RWPE1 (cell line): ENCODE measurements at regions of chr1 and their contacts with region 1.

Region 1: DNA sequence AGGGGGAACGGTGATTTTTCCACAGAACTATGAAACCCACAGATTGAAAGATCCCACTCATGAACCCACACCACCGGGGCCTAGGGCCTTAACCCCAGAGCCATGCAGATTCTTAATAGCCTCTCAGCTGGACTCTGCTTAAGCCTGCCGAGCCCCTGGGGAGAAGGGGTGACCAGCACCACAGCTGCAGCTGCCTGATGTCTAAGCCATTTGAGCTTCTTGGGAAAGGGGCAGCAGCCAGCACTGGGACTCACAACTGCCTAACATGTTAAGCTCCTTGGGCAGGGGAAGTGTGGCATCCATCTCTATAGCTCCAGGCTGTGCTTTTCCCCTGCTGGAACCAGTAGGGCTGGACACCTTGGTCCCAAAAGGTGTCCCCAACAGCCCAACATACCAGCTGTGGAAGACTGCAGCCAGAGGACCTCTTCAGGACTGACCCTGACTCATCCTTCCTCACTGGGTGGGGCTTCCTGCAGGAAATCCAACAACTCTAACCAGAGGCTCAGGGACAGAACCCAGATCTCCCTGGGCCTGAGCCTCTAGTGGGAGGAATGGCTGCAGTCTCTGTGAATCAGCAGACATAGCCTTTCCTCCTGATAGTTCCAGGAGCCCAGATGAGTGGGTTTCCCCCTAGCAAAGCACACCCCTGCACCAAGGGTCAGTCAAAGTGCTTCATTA is 34.6 kb upstream of the FMO3 start:
- DNase-seq: no peak
- H3K27ac ChIP-seq: no peak overlapping the region
- CTCF ChIP-seq: no peak

Region 2: DNA sequence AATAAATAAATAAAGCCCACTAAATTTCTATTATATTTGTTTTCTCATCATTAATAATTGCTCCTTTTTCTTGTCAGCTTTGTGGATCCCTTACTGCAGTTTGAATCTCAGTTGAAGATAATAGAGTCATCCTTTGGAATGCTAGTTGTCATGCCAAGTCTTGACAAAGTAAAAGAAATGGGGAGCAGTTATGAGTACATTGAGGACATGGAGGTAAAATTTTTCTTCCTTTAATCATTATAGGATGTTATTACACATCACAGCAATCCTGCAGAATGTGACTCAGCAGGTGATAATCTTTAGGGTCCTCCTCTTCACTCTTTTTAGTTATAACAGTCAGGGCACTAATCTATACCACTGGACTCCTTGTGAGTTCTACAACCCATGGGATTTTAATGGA is 96.7 kb before region 1 on chr1:
- CTCF ChIA-PET with region 1: no interaction called
- POLR2A ChIA-PET with region 1: no interaction called
- DNase-seq: peak; percentile 5
- H3K27ac ChIP-seq: no peak overlapping the region
- CTCF ChIP-seq: no peak

Region 3: DNA sequence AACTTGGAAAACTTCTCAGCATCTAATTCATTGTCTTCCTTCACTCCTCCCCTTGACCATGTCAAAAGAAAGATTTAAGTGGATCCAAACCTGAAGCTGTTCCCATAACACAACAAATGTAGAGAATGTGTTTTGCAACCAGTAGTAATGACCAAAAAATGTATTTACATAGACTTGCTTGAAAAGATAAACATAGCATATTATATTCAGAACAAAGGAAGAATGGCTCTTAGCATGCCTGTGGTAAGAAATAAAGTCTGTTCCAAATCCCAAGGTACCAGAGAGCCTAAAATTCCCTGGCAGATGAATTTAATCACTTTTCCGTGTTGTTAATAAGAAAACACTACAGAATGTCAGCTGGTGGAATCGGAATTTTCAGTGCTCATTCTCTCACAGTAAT is 71.4 kb after region 1 on chr1:
- CTCF ChIA-PET with region 1: no interaction called
- POLR2A ChIA-PET with region 1: interaction called, 12 read pairs
- DNase-seq: no peak
- H3K27ac ChIP-seq: no peak overlapping the region
- CTCF ChIP-seq: no peak